ENCODE measurements at regions of chr3 and their contacts with region 1.

Region 1: GRCh38 chr3:188677344-188677743 is 494.4 kb upstream of the TPRG1 start:
- DNase-seq: no peak
- H3K4me3 ChIP-seq: no peak overlapping the region
- H3K27ac ChIP-seq: no peak overlapping the region
- H3K4me1 ChIP-seq: peaks cover 0 to 29% (median 18%) of the 10 kb centered on the region in 4 donors
- H3K27me3 ChIP-seq: no peaks in the 10 kb centered on the region
- CTCF ChIP-seq: no peak
- EP300 ChIP-seq: no peak
- POLR2A ChIP-seq: no peak

Region 2: GRCh38 chr3:188037216-188037718 is 640.1 kb before region 1 on chr3:
- in situ Hi-C with region 1: no loop called
- intact Hi-C with region 1: loop called (anchors 5 kb)
- DNase-seq: peak; percentile 46
- H3K4me3 ChIP-seq: no peak overlapping the region
- H3K27ac ChIP-seq: peak overlapping the region in 2 of 4 donors; percentile 1 to 26
- H3K4me1 ChIP-seq: peaks cover 0 to 16% (median 14%) of the 10 kb centered on the region in 4 donors
- H3K27me3 ChIP-seq: no peaks in the 10 kb centered on the region
- CTCF ChIP-seq: peak; percentile 41 to 71 (median 50)
- EP300 ChIP-seq: no peak
- POLR2A ChIP-seq: no peak